ENCODE measurements at regions of chr14 and their contacts with region 1.

Region 1: DNA sequence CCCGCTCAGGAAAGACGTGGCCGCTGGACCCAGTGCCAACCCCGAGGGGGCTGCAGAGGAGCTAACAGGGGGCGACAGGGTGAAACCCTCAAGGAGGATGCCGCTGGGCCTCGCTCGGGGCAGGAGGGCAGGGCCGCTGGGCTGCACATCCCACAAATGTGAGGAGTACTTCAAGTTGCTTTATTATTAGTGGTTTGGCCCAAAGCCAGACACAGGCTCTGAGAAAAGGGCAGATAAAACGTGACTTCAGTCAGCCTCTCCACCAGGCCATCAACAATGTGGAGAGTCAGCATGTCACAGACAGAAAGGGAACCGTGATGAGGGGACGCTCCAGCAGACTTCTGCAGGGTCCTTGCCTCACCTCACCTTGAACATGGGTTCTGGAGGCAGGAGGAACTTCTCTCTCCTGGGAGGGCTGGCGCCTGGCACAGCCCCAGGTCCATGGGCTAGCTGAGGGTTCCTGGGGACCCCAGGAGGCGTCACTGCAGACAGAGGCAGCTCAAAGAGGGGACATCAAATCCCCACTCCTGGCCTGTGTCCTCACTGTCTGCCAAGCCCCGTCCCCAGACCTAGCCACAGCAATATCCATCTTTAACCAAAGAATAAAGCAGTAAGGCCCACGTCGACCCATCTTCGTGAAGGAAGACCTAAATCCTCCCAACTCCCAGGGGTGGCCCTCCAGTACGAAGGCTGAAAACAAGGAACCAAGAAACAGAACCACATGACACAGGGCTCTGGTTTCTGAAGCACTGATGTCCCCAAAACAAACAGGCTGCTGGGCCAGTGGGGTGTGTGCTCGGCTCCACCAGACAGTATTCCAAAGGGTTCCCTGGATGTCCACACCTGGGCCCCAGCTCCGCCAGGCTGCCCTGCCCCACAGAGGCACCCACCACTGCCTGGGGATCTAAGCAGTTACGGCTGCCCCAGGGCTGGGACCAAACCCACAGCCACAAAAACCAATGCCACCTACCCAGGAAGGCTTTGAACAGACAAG is 35.1 kb downstream of the CCDC85C start:
- DNase-seq: peak; percentile 40 to 71
- H3K4me3 ChIP-seq: no peak overlapping the region
- H3K27ac ChIP-seq: peak overlapping the region in 3 of 5 donors; percentile 14 to 91 (median 83)
- H3K4me1 ChIP-seq: peaks cover 84 to 100% (median 95%) of the 10 kb centered on the region in 4 donors
- H3K27me3 ChIP-seq: no peaks in the 10 kb centered on the region
- CTCF ChIP-seq: no peak
- EP300 ChIP-seq: no peak
- POLR2A ChIP-seq: no peak

Region 2: DNA sequence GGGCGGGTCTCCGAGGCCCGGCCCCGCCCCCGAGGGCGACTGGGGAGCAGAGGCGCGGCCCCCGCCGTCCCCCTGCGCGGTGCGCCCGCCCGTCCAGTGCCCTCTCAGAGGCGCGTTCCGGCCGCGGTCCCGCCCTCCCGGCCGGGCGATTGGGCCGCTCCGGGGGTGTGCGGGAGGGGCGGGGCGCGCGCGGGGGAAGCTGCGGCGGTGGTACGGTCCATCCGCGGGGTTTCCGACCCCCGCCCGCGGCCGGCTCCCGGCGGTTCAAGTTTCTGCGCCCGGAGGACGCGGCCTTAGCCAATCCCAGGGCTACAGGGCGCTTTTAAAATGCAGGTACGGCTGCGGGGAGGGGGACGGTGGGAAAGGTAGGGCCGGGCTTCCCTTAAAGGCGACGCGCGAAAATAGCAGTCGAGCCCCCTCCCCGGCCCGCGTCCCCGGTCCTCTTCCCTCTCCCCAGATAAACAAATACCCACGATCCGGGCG is 35.5 kb after region 1 on chr14:
- intact Hi-C with region 1: loop called (anchors 5 kb)
- DNase-seq: peak; percentile 97 to 98
- H3K4me3 ChIP-seq: peak overlapping the region; percentile 67 to 87 (median 78)
- H3K27ac ChIP-seq: peak overlapping the region; percentile 90 to 96 (median 92)
- H3K4me1 ChIP-seq: peaks cover 44 to 63% (median 59%) of the 10 kb centered on the region in 4 donors
- H3K27me3 ChIP-seq: peaks cover 0 to 24% (median 3%) of the 10 kb centered on the region in 3 donors
- CTCF ChIP-seq: no peak
- EP300 ChIP-seq: no peak
- POLR2A ChIP-seq: no peak

Measured in stomach (tissue), 19 donors.